Dendritic cell treated with granulocyte-macrophage colony-stimulating factor and Interleukin-4, amounts not matched to agents 40 ng/mL and 50 ng/mL, for 4 days (primary cell): ENCODE measurements at regions of chr1 and their contacts with region 1.

Region 1: DNA sequence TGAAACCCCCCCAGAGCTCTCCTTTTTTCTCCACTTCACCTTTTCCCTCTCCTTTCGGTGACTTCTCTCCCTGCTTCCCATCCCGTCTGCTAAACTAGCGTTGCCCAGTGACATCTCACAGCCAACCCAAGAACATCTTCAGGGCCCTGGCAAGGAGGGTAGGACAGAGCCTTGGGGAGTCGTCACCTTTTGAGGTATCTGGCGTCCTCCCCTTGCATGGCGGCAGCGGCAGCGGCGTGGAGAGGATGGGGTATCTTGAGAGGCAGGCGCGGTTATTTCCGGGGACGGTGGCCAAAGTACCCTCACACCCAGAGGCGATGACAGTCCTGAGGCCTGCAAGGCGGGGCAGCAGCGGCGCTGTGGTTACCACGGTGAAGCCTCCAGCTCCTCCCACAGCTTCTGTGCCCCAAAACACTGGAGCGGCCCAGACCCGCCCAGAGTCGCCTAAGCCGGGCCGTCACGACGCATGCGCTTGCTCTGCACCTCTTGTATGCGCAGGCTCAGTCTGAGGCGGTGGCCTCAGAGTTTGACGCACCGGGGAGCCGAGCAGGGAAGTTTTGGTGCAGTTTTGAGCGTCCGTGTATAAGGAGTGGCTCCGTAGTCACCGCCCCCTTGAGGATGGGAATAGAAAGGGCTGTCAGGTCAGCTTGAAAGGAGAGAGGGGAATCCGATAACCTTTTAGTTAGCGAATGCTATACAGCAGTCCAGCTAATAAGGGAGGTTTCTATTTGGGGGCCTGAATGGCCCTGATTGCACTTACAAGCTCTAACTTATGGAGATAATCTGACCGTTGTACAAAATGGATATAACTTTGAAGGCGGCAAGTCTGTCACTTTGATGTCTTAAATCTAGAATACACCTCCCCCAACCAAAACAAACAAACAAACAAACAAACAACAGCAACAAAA is at the start of gene KIFAP3:
- H3K4me3 Mint-ChIP-seq: peak within 1 kb of the TSS; percentile 88
- H3K27ac Mint-ChIP-seq: peak within 1 kb of the TSS; percentile 86
- H3K4me1 Mint-ChIP-seq: peaks cover 24% of the 10 kb centered on the region
- H3K27me3 Mint-ChIP-seq: no peaks in the 10 kb centered on the region

Region 2: DNA sequence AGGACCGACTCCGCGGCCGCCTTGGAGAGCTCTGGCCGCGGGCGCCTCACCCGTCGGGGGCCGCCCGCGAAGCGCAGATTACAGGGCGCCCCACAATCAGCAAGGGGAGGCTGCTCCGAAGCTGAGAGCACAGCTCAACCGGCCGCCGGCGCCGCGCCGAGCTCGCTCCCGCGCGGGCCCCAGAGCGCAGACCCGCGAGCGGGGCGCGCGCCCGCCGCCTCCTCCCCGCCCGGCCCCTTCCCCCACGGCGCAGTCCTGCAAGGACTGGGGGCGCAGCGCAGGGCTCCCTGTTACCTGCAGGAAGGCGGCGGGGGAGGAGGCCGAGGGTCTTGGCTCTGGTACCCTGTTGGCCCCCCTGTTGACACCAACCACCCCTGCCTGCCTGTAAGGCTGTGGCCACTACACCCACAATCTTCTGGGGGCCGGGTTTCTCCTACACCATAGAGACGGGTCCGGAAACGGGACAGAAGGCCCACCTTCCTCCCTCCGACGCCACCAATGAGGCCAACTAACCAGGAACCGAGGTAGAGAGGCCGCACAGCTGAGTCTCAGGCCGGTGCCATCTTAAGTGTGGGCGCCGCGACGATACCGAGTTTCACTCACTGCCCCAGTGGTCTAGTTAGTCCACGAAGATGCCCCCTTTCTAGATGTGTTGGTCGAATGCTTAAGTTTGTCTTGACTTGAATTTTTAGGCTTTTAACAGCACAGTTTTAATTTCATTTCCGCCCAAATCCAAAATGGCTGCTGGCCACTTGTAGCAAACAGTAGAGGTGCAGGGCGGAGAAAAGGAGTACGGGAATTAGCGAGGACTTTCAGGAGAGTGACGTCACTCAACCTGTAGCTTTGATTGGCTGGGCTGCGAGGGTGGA is 180.8 kb before region 1 on chr1 and contains the start of gene SCYL3:
- intact Hi-C with region 1: loop called (anchors 5 kb)
- H3K4me3 Mint-ChIP-seq: peak within 1 kb of the TSS; percentile 87
- H3K27ac Mint-ChIP-seq: peak within 1 kb of the TSS; percentile 100
- H3K4me1 Mint-ChIP-seq: peaks cover 44% of the 10 kb centered on the region
- H3K27me3 Mint-ChIP-seq: peaks cover 11% of the 10 kb centered on the region

Region 3: GRCh38 chr1:170027760-170028159 is 46.7 kb before region 1 on chr1:
- intact Hi-C with region 1: loop called (anchors 10 kb)
- H3K4me3 Mint-ChIP-seq: no peak overlapping the region
- H3K27ac Mint-ChIP-seq: no peak overlapping the region
- H3K4me1 Mint-ChIP-seq: no peaks in the 10 kb centered on the region
- H3K27me3 Mint-ChIP-seq: no peaks in the 10 kb centered on the region

Region 4: DNA sequence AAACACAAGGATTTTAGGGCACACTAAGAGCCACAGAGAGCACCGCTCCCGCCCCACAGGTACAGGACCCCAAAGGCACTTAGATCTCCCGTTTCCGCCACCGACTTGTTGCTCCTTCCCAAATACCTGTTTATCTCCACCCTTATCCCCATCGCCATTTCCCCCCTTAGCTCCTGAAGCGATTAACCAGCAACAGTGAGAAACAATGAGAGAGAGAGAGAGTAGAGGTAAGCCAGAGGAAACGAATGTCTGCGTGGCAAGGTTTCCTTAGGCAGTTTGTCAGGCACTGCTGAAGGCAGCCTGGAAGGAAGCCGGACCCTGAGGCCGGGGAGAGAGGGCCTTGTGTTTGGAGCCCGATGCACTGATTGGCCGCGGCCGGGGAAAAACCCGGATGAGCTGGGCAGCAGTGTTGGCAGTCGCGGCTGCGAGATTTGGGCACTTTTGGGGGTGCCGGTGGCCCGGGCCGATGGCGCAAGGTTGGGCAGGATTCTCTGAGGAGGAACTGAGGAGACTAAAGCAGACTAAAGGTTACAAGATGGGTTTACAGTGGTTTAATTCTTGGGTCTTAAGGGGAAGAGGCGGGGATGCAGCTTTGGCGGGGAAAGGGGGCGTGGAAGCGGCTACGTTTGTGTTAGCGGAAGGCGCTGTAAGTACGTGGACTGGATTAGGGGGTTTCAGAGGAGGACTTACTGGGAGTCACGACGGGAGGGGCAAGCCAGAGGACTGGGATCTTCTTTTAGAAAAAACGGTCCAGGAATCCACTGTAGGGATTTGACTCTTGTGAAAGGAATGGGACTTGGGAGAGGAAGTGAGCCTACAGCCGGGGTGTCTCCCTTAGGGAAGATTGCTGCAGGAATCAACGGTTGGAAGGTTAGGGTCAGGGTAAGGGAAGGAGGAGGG is 457.5 kb after region 1 on chr1 and contains the start of gene GORAB:
- intact Hi-C with region 1: loop called (anchors 5 kb)
- H3K4me3 Mint-ChIP-seq: no peak within 1 kb of the TSS
- H3K27ac Mint-ChIP-seq: no peak within 1 kb of the TSS
- H3K4me1 Mint-ChIP-seq: peaks cover 10% of the 10 kb centered on the region
- H3K27me3 Mint-ChIP-seq: peaks cover 9% of the 10 kb centered on the region

Region 5: GRCh38 chr1:170545476-170545875 is 471.0 kb after region 1 on chr1:
- intact Hi-C with region 1: no loop called
- H3K4me3 Mint-ChIP-seq: no peak overlapping the region
- H3K27ac Mint-ChIP-seq: no peak overlapping the region
- H3K4me1 Mint-ChIP-seq: peaks cover 4% of the 10 kb centered on the region
- H3K27me3 Mint-ChIP-seq: no peaks in the 10 kb centered on the region

Region 6: GRCh38 chr1:171313835-171314320 is 1239.4 kb after region 1 on chr1 and contains the start of gene FMO4:
- intact Hi-C with region 1: loop called (anchors 10 kb)
- H3K4me3 Mint-ChIP-seq: peak within 1 kb of the TSS; percentile 67
- H3K27ac Mint-ChIP-seq: peak within 1 kb of the TSS; percentile 82
- H3K4me1 Mint-ChIP-seq: peaks cover 9% of the 10 kb centered on the region
- H3K27me3 Mint-ChIP-seq: no peaks in the 10 kb centered on the region

Region 7: GRCh38 chr1:171741872-171742576 is 1667.5 kb after region 1 on chr1 and contains the start of gene VAMP4:
- intact Hi-C with region 1: loop called (anchors 10 kb)
- H3K4me3 Mint-ChIP-seq: peak within 1 kb of the TSS; percentile 98
- H3K27ac Mint-ChIP-seq: peak within 1 kb of the TSS; percentile 93
- H3K4me1 Mint-ChIP-seq: peaks cover 43% of the 10 kb centered on the region
- H3K27me3 Mint-ChIP-seq: no peaks in the 10 kb centered on the region